Activated CD4-positive, alpha-beta T cell treated with anti-CD3 and anti-CD28 coated beads, Interleukin-2, amount 10 ng/mL, durations not matched to agents 24 days and 14 days (primary cell): ENCODE measurements at regions of chr12 and their contacts with region 1.

Region 1: DNA sequence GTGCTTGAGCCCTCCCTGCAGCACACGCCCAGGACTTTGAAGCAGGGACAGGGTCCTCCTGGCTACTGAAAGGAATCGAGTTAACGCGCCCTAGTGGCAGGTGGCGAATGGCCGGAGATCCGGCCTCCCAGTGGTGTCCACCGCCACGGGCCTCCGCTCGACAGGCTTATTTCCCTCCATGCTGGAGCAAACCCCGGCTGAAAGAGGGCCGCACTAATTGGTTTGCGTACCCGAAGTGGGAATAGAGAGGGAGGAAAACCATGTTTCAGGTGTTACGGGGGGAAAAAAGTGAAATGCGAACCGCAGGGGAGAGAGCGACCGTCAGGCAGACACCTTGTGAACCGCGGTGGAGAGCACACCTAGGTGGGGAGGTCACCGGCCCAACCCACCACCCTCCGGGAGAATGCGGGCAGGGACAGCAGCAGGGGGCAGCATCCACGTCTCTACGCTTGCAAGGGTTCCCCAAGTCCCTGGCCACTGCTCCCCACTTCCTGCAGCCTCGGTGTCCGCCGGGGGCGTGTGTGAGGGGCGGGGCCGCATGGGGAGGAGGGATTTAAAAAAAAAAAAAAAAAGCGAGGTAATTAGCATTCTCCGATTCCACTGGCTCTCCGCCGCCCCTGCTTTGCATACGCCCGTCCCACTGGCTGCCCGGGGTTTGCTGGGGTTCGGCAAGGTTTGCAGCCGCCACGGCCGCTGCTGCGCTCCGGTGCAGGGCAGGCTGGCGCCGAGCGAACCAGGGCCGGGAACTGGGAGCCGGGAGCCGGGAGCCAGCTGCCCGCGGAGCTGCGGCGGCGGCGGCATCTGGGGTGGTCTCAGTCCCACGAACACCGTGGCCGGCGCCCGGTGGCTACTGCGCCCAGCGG is 224.6 kb upstream of the CRY1 start:
- DNase-seq: peak; percentile 97
- H3K4me3 Mint-ChIP-seq: peak overlapping the region; percentile 88
- H3K27ac Mint-ChIP-seq: peak overlapping the region; percentile 50
- H3K4me1 Mint-ChIP-seq: peaks cover 26% of the 10 kb centered on the region
- H3K27me3 Mint-ChIP-seq: peaks cover 28% of the 10 kb centered on the region

Region 2: GRCh38 chr12:107131832-107132616 is 186.0 kb before region 1 on chr12:
- intact Hi-C with region 1: loop called (anchors 5 kb)
- DNase-seq: peak; percentile 76
- H3K4me3 Mint-ChIP-seq: no peak overlapping the region
- H3K27ac Mint-ChIP-seq: no peak overlapping the region
- H3K4me1 Mint-ChIP-seq: no peaks in the 10 kb centered on the region
- H3K27me3 Mint-ChIP-seq: peaks cover under 1% of the 10 kb centered on the region

Region 3: GRCh38 chr12:107328442-107329133 is 10.6 kb after region 1 on chr12:
- intact Hi-C with region 1: loop called (anchors 1 kb)
- DNase-seq: no peak
- H3K4me3 Mint-ChIP-seq: peak overlapping the region; percentile 19
- H3K27ac Mint-ChIP-seq: no peak overlapping the region
- H3K4me1 Mint-ChIP-seq: peaks cover 75% of the 10 kb centered on the region
- H3K27me3 Mint-ChIP-seq: no peaks in the 10 kb centered on the region

Region 4: GRCh38 chr12:107372229-107372658 is 54.3 kb after region 1 on chr12:
- intact Hi-C with region 1: loop called (anchors 1 kb)
- DNase-seq: peak; percentile 87
- H3K4me3 Mint-ChIP-seq: peak overlapping the region; percentile 69
- H3K27ac Mint-ChIP-seq: peak overlapping the region; percentile 86
- H3K4me1 Mint-ChIP-seq: peaks cover 72% of the 10 kb centered on the region
- H3K27me3 Mint-ChIP-seq: no peaks in the 10 kb centered on the region

Region 5: GRCh38 chr12:107607464-107608392 is 289.7 kb after region 1 on chr12:
- intact Hi-C with region 1: loop called (anchors 1 kb)
- DNase-seq: peak; percentile 93
- H3K4me3 Mint-ChIP-seq: no peak overlapping the region
- H3K27ac Mint-ChIP-seq: no peak overlapping the region
- H3K4me1 Mint-ChIP-seq: peaks cover 3% of the 10 kb centered on the region
- H3K27me3 Mint-ChIP-seq: no peaks in the 10 kb centered on the region

Region 6: GRCh38 chr12:107760809-107761501 is 443.0 kb after region 1 on chr12 and contains the start of gene PRDM4:
- intact Hi-C with region 1: loop called (anchors 2 kb)
- DNase-seq: peak; percentile 98
- H3K4me3 Mint-ChIP-seq: peak within 1 kb of the TSS; percentile 93
- H3K27ac Mint-ChIP-seq: peak within 1 kb of the TSS; percentile 88
- H3K4me1 Mint-ChIP-seq: peaks cover 26% of the 10 kb centered on the region
- H3K27me3 Mint-ChIP-seq: peaks cover 7% of the 10 kb centered on the region
- total RNA-seq, gene PRDM4: 30.2 and 31.1 TPM in 2 replicates

Region 7: DNA sequence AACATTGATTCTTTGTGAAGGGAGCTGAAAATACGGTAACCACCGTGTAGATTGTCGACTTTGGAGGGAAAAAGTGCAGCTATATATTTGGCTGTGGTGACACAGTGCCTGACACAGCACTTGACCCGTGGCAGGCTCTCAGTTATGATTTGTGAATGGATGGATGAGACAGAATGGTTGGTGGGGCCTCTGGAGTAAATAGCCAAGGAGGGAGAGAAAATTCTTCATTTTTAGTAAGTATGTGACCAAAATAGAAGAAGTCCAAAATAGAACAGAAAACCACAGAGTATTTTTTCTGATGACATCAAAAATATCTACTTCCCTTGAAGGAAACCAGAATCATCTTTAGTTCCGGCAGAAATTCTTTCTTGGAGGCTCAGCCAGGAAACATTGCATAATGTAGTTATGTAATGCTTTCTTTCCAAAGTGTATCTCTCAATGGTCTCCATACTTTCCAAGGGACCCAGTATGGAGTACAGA is 729.1 kb after region 1 on chr12:
- intact Hi-C with region 1: no loop called
- DNase-seq: no peak
- H3K4me3 Mint-ChIP-seq: no peak overlapping the region
- H3K27ac Mint-ChIP-seq: no peak overlapping the region
- H3K4me1 Mint-ChIP-seq: peaks cover 2% of the 10 kb centered on the region
- H3K27me3 Mint-ChIP-seq: peaks cover 6% of the 10 kb centered on the region